ENCODE measurements at regions of chr2 and their contacts with region 1.

Region 1: DNA sequence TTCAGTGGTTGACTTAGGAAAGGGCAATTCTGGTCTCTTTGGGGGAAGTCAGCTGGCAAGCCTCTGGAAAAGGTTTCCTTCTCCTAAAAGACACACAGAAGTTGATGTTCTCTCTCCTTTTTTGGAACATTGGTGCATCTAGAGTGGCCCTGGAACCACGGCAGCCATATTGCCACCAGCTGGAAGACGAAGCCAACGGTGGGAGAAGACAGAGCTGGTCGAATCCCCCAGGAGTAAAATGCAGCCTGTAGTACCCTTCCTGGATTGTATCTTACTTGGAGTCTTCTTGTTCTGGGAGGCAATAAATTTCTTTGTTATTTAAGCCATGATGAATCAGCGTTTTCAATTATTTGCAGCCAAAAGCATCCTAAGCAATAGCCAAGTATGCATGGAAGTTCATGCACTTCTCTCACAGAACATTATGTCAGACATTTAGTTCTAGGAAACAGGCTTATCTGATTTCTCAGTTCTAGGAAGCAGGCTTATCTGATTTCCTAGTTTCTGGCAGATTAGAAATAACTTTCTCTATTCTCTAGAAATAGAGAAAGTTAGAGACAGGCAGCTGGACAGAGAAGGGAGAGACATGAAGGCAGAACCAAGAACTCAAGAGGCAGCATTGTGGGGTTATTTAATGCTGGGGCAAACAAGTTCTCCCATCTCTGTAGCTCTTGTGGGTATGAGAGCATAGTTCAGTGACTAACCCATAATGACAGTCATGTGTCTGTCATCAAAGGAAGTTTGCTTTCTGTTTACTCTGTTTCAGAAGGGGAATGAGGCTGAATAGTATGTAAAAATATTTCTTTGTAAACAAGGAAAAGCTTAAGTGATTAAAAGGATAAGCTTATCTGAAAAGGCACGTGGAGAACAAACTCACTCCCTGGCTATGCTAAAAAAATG is 40.5 kb upstream of the NABP1 start:
- DNase-seq: peak; percentile 50
- H3K4me3 Mint-ChIP-seq: peak overlapping the region; percentile 46
- H3K27ac Mint-ChIP-seq: peak overlapping the region; percentile 94
- H3K4me1 Mint-ChIP-seq: peaks cover 61% of the 10 kb centered on the region
- H3K27me3 Mint-ChIP-seq: peaks cover 3% of the 10 kb centered on the region

Region 2: GRCh38 chr2:191617575-191617974 is 19.9 kb before region 1 on chr2:
- CTCF ChIA-PET with region 1: interaction called, 21 read pairs
- POLR2A ChIA-PET with region 1: no interaction called
- DNase-seq: peak; percentile 68
- H3K4me3 Mint-ChIP-seq: peak overlapping the region; percentile 0
- H3K27ac Mint-ChIP-seq: peak overlapping the region; percentile 83
- H3K4me1 Mint-ChIP-seq: peaks cover 44% of the 10 kb centered on the region
- H3K27me3 Mint-ChIP-seq: peaks cover 3% of the 10 kb centered on the region

Region 3: GRCh38 chr2:191625016-191625415 is 12.4 kb before region 1 on chr2:
- CTCF ChIA-PET with region 1: interaction called, 21 read pairs
- POLR2A ChIA-PET with region 1: no interaction called
- DNase-seq: peak; percentile 42
- H3K4me3 Mint-ChIP-seq: no peak overlapping the region
- H3K27ac Mint-ChIP-seq: peak overlapping the region; percentile 68
- H3K4me1 Mint-ChIP-seq: peaks cover 48% of the 10 kb centered on the region
- H3K27me3 Mint-ChIP-seq: peaks cover 1% of the 10 kb centered on the region

Region 4: GRCh38 chr2:191650896-191651773 is 13.7 kb after region 1 on chr2:
- CTCF ChIA-PET with region 1: interaction called, 12 read pairs
- POLR2A ChIA-PET with region 1: no interaction called
- DNase-seq: no peak
- H3K4me3 Mint-ChIP-seq: no peak overlapping the region
- H3K27ac Mint-ChIP-seq: no peak overlapping the region
- H3K4me1 Mint-ChIP-seq: peaks cover 5% of the 10 kb centered on the region
- H3K27me3 Mint-ChIP-seq: peaks cover under 1% of the 10 kb centered on the region

Region 5: DNA sequence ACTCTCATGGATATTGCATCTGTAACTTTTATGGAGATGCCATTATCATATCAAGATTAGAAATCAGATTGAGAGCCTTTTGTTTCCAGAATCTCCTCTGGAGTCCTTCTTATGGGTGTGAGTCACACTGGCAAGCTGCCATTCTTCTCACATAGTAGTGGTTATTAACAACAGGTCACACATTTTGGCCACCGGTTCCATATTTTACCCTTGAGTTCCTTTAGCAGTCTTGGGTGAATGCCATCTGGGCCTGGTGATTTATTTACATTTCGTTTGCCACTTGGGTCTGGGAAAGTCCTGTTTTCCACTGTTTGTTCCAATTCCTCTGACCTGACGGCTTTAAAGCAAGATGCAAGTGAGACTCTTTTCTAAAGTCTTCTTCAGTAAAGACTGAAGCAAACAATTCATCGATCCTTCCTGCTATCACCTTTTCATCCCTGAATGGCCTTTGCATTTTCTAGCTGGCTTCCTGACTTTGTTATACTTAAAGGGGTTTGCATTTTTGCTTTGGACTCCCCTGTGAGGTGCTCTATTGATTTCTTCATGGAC is 290.0 kb after region 1 on chr2:
- CTCF ChIA-PET with region 1: no interaction called
- POLR2A ChIA-PET with region 1: no interaction called
- DNase-seq: no peak
- H3K4me3 Mint-ChIP-seq: no peak overlapping the region
- H3K27ac Mint-ChIP-seq: no peak overlapping the region
- H3K4me1 Mint-ChIP-seq: no peaks in the 10 kb centered on the region
- H3K27me3 Mint-ChIP-seq: peaks cover 8% of the 10 kb centered on the region